CD8-positive, alpha-beta T cell (primary cell): ENCODE measurements at regions of chr2 and their contacts with region 1.

Region 1: GRCh38 chr2:32010670-32011484 is at the start of gene MEMO1:
- DNase-seq: peak; percentile 76 to 95 (median 92)
- ATAC-seq: peak; percentile 76
- H3K4me3 ChIP-seq: peak within 1 kb of the TSS; percentile 66 to 74
- H3K4me3 Mint-ChIP-seq: peak within 1 kb of the TSS; percentile 85
- H3K27ac ChIP-seq: peak within 1 kb of the TSS; percentile 44 to 79
- H3K27ac Mint-ChIP-seq: peak within 1 kb of the TSS; percentile 91
- H3K4me1 ChIP-seq: peaks cover 17% of the 10 kb centered on the region
- H3K4me1 Mint-ChIP-seq: peaks cover 38% of the 10 kb centered on the region
- H3K27me3 ChIP-seq: no peaks in the 10 kb centered on the region
- H3K27me3 Mint-ChIP-seq: no peaks in the 10 kb centered on the region
- CTCF ChIP-seq: no peak
- total RNA-seq, gene MEMO1: 32.7 to 34.5 TPM

Region 2: GRCh38 chr2:32039447-32040219 is 28.8 kb after region 1 on chr2 and contains the start of gene DPY30:
- CTCF ChIA-PET with region 1: no interaction called
- POLR2A ChIA-PET with region 1: interaction called, 10 read pairs
- intact Hi-C with region 1: loop called (anchors 2 kb)
- DNase-seq: peak; percentile 76 to 95 (median 91)
- ATAC-seq: peak; percentile 96
- H3K4me3 ChIP-seq: peak within 1 kb of the TSS; percentile 81 to 83
- H3K4me3 Mint-ChIP-seq: peak within 1 kb of the TSS; percentile 94
- H3K27ac ChIP-seq: peak within 1 kb of the TSS; percentile 64 to 86
- H3K27ac Mint-ChIP-seq: peak within 1 kb of the TSS; percentile 98
- H3K4me1 ChIP-seq: peaks cover 8% of the 10 kb centered on the region
- H3K4me1 Mint-ChIP-seq: peaks cover 20% of the 10 kb centered on the region
- H3K27me3 ChIP-seq: no peaks in the 10 kb centered on the region
- H3K27me3 Mint-ChIP-seq: no peaks in the 10 kb centered on the region
- CTCF ChIP-seq: no peak
- total RNA-seq, gene DPY30: 9.6 to 10.8 TPM